Transverse colon (tissue), 4 donors: ENCODE measurements at regions of chr2 and their contacts with region 1.

Region 1: GRCh38 chr2:204860274-204860673 is 315.0 kb downstream of the PARD3B start:
- DNase-seq: no peak
- H3K4me3 ChIP-seq: no peak overlapping the region
- H3K27ac ChIP-seq: no peak overlapping the region
- H3K4me1 ChIP-seq: no peaks in the 10 kb centered on the region
- H3K27me3 ChIP-seq: no peaks in the 10 kb centered on the region
- CTCF ChIP-seq: no peak
- EP300 ChIP-seq: no peak
- POLR2A ChIP-seq: no peak

Region 2: GRCh38 chr2:204824778-204825453 is 35.4 kb before region 1 on chr2:
- in situ Hi-C with region 1: no loop called
- intact Hi-C with region 1: no loop called
- DNase-seq: no peak
- H3K4me3 ChIP-seq: no peak overlapping the region
- H3K27ac ChIP-seq: no peak overlapping the region
- H3K4me1 ChIP-seq: no peaks in the 10 kb centered on the region
- H3K27me3 ChIP-seq: no peaks in the 10 kb centered on the region
- CTCF ChIP-seq: no peak
- EP300 ChIP-seq: no peak
- POLR2A ChIP-seq: no peak

Region 3: GRCh38 chr2:204877691-204878090 is 17.4 kb after region 1 on chr2:
- in situ Hi-C with region 1: no loop called
- intact Hi-C with region 1: loop called (anchors 1 kb)
- DNase-seq: no peak
- H3K4me3 ChIP-seq: no peak overlapping the region
- H3K27ac ChIP-seq: no peak overlapping the region
- H3K4me1 ChIP-seq: peaks cover 0 to 4% (median 0%) of the 10 kb centered on the region in 4 donors
- H3K27me3 ChIP-seq: no peaks in the 10 kb centered on the region
- CTCF ChIP-seq: no peak
- EP300 ChIP-seq: no peak
- POLR2A ChIP-seq: no peak

Region 4: GRCh38 chr2:205115511-205115910 is 255.2 kb after region 1 on chr2:
- in situ Hi-C with region 1: no loop called
- intact Hi-C with region 1: no loop called
- DNase-seq: no peak
- H3K4me3 ChIP-seq: no peak overlapping the region
- H3K27ac ChIP-seq: no peak overlapping the region
- H3K4me1 ChIP-seq: no peaks in the 10 kb centered on the region
- H3K27me3 ChIP-seq: no peaks in the 10 kb centered on the region
- CTCF ChIP-seq: no peak
- EP300 ChIP-seq: no peak
- POLR2A ChIP-seq: no peak